Gastrocnemius medialis (tissue), 4 donors: ENCODE measurements at regions of chr1 and their contacts with region 1.

Region 1: GRCh38 chr1:205791568-205792180 is 16.4 kb upstream of the RAB29 start:
- DNase-seq: peak; percentile 37 to 65
- ATAC-seq: peak; percentile 79 to 84
- H3K4me3 ChIP-seq: no peak overlapping the region
- H3K27ac ChIP-seq: peak overlapping the region in 3 of 4 donors; percentile 2 to 45 (median 37)
- H3K4me1 ChIP-seq: peaks cover 0 to 5% of the 10 kb centered on the region in 2 donors
- H3K27me3 ChIP-seq: no peaks in the 10 kb centered on the region
- CTCF ChIP-seq: peak; percentile 59 to 81 (median 67)
- POLR2A ChIP-seq: no peak

Region 2: DNA sequence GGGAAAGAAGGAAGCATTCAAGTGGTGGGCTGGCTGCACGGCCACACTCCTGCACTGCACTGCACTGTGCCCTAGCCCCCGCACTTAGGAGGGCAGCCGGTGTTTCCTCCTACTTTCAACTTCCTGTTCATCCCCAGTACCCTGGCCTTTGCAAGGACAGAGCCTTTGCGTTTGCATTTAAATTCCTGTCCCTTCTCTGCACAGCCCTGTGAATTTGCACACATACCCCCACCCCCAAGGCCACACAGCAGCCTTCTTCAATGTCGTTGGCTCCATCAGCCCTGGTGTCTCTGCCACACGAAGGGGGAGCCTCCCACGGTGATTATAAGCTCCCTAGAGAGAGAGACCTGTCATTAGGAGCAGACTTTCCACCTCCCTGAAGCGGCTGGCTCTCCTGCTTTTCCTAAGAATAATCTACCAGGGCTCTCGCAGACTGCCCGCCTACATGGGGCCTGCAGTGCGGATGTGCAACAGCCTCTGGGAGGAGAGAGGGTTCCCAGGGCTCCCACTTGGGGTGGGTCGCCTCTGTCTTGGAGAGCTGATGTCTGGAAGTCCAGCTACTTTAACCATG is 98.2 kb before region 1 on chr1:
- in situ Hi-C with region 1: no loop called
- intact Hi-C with region 1: no loop called
- DNase-seq: no peak
- ATAC-seq: no peak
- H3K4me3 ChIP-seq: no peak overlapping the region
- H3K27ac ChIP-seq: no peak overlapping the region
- H3K4me1 ChIP-seq: no peaks in the 10 kb centered on the region
- H3K27me3 ChIP-seq: no peaks in the 10 kb centered on the region
- CTCF ChIP-seq: no peak
- POLR2A ChIP-seq: no peak

Region 3: GRCh38 chr1:205907794-205908193 is 116.1 kb after region 1 on chr1:
- in situ Hi-C with region 1: loop called (anchors 5 to 25 kb)
- intact Hi-C with region 1: no loop called
- DNase-seq: no peak
- ATAC-seq: no peak
- H3K4me3 ChIP-seq: no peak overlapping the region
- H3K27ac ChIP-seq: no peak overlapping the region
- H3K4me1 ChIP-seq: no peaks in the 10 kb centered on the region
- H3K27me3 ChIP-seq: no peaks in the 10 kb centered on the region
- CTCF ChIP-seq: peak in 4 of 5 experiments; percentile 18 to 48 (median 32)
- POLR2A ChIP-seq: no peak

Region 4: DNA sequence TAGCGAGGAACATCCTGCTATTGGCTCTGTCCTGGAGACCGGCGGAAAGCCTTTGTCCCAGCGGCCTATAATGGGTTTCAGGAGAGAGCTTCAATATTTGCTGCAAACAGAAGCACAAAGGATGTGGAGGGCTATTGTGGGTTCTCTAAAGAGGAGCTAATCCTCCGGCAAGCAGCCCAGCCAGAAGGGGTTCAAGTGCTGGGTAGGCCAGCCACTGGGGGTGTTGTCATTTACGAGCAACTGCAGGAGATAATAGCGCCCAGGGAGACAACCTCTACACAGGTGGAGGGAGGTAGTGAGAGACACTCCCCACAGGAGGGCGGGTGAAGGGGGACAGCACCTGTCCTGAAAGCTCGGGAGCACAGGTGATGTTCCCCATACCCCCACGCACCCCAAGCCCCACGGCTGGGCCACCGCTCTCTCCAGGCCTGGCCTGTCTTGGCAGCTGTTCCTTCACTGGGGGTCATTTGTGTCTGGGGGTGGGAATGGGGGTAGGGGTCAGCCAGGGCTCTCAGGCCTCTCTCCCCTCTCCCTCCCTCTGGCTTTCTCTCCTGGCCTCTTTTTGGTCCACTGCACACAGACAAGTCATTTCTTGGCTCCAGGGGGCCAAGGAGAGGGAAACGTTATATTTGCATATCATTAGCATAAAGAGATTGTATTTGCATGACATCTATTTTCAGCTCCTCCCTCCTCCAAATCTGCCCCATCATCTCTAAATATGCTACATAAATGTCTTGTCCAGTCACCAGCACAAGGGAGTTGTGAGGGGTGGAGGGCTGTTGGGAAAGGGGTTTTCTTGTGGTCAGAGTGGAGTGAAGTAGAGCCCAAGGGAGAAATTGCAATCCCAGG is 173.6 kb after region 1 on chr1:
- in situ Hi-C with region 1: loop called in 1 of 4 experiments (anchors 5 kb)
- intact Hi-C with region 1: no loop called
- DNase-seq: no peak
- ATAC-seq: no peak
- H3K4me3 ChIP-seq: no peak overlapping the region
- H3K27ac ChIP-seq: no peak overlapping the region
- H3K4me1 ChIP-seq: peaks cover 20 to 27% of the 10 kb centered on the region in 2 donors
- H3K27me3 ChIP-seq: no peaks in the 10 kb centered on the region
- CTCF ChIP-seq: no peak
- POLR2A ChIP-seq: no peak

Region 5: GRCh38 chr1:205977402-205978014 is 185.8 kb after region 1 on chr1:
- in situ Hi-C with region 1: loop called in 3 of 4 experiments (anchors 5 to 10 kb)
- intact Hi-C with region 1: loop called (anchors 1 kb)
- DNase-seq: peak; percentile 45 to 50
- ATAC-seq: peak; percentile 83 to 88
- H3K4me3 ChIP-seq: no peak overlapping the region
- H3K27ac ChIP-seq: peak overlapping the region; percentile 66 to 85 (median 71)
- H3K4me1 ChIP-seq: peaks cover 14 to 20% of the 10 kb centered on the region in 2 donors
- H3K27me3 ChIP-seq: no peaks in the 10 kb centered on the region
- CTCF ChIP-seq: peak; percentile 91 to 97 (median 94)
- POLR2A ChIP-seq: no peak

Region 6: DNA sequence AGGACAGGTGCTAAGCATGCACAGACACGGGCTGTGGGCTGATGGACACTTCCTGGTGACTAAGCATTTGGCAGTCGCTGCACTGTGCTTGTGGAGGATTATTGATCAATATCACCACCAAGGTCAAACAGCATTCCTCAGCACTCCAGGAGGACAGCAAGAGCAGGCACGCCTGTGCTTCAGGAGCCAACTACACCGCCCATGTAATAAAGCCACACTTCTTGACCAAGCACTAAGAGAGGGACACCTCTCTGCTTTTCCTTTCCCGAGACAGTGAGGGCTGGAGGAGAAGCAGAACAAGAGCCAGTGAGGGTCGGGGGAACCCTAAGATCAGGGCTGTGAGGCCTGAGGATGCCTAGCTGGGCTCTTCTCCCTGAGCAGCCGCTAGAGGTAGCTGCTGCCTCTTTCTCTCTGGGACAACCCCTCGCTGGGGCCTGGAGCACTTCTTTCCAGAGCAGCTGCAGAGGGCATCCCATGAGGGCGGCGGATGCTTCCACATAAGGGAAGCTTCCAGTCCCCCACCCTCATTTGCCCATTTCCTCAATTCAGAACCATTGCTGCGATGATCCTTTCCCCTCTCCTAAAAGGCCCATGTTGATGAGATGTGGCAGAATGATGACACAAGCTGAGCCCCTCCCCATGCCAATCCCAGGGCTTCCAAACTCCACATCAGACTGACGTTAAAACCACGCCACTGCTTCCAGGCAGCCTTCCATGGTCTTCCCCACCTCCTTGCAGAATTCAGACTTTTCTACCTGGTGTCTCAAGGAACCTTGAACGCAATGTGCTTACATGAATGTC is 192.5 kb after region 1 on chr1:
- in situ Hi-C with region 1: loop called in 3 of 4 experiments (anchors 5 to 10 kb)
- intact Hi-C with region 1: no loop called
- DNase-seq: peak; percentile 38 to 50
- ATAC-seq: peak; percentile 71 to 82
- H3K4me3 ChIP-seq: no peak overlapping the region
- H3K27ac ChIP-seq: no peak overlapping the region
- H3K4me1 ChIP-seq: peaks cover 0 to 4% of the 10 kb centered on the region in 2 donors
- H3K27me3 ChIP-seq: no peaks in the 10 kb centered on the region
- CTCF ChIP-seq: peak; percentile 38 to 67 (median 58)
- POLR2A ChIP-seq: no peak

Region 7: GRCh38 chr1:206001476-206001888 is 209.8 kb after region 1 on chr1:
- in situ Hi-C with region 1: no loop called
- intact Hi-C with region 1: no loop called
- DNase-seq: no peak
- ATAC-seq: peak; percentile 49 to 56
- H3K4me3 ChIP-seq: no peak overlapping the region
- H3K27ac ChIP-seq: peak overlapping the region; percentile 16 to 77 (median 43)
- H3K4me1 ChIP-seq: peaks cover 41 to 42% of the 10 kb centered on the region in 2 donors
- H3K27me3 ChIP-seq: no peaks in the 10 kb centered on the region
- CTCF ChIP-seq: no peak
- POLR2A ChIP-seq: no peak

Region 8: GRCh38 chr1:206106328-206107167 is 314.9 kb after region 1 on chr1:
- in situ Hi-C with region 1: loop called in 3 of 4 experiments (anchors 10 to 25 kb)
- intact Hi-C with region 1: loop called (anchors 1 kb)
- DNase-seq: peak; percentile 48 to 69
- ATAC-seq: peak; percentile 83 to 84
- H3K4me3 ChIP-seq: no peak overlapping the region
- H3K27ac ChIP-seq: no peak overlapping the region
- H3K4me1 ChIP-seq: no peaks in the 10 kb centered on the region
- H3K27me3 ChIP-seq: no peaks in the 10 kb centered on the region
- CTCF ChIP-seq: peak; percentile 72 to 80 (median 76)
- POLR2A ChIP-seq: no peak

Region 9: GRCh38 chr1:206693029-206693428 is 901.4 kb after region 1 on chr1:
- in situ Hi-C with region 1: no loop called
- intact Hi-C with region 1: no loop called
- DNase-seq: peak; percentile 81 to 93
- ATAC-seq: peak; percentile 60 to 67
- H3K4me3 ChIP-seq: peak overlapping the region; percentile 34 to 55 (median 37)
- H3K27ac ChIP-seq: peak overlapping the region; percentile 93 to 98 (median 96)
- H3K4me1 ChIP-seq: peaks cover 100% of the 10 kb centered on the region in 2 donors
- H3K27me3 ChIP-seq: no peaks in the 10 kb centered on the region
- CTCF ChIP-seq: no peak
- POLR2A ChIP-seq: peak; percentile 57 to 60